SK-N-SH (cell line): ENCODE measurements at regions of chr16 and their contacts with region 1.

Region 1: GRCh38 chr16:83952940-83953795 is at the start of gene OSGIN1:
- DNase-seq: peak; percentile 88
- H3K4me3 ChIP-seq: peak within 1 kb of the TSS; percentile 62 to 65
- H3K27ac ChIP-seq: peak within 1 kb of the TSS; percentile 53 to 78
- H3K4me1 ChIP-seq: peaks cover 9 to 27% of the 10 kb centered on the region in 2 experiments; a peak in 2 of 4 replicates
- H3K27me3 ChIP-seq: no peaks in the 10 kb centered on the region
- CTCF ChIP-seq: no peak
- EP300 ChIP-seq: 0 out of 4 replicates have a peak, but pooled peaks of 1 of the 2 experiments have one; percentile 30
- RAD21 ChIP-seq: no peak
- polyA plus RNA-seq, gene OSGIN1: 4.8 and 5.2 TPM in 2 replicates

Region 2: DNA sequence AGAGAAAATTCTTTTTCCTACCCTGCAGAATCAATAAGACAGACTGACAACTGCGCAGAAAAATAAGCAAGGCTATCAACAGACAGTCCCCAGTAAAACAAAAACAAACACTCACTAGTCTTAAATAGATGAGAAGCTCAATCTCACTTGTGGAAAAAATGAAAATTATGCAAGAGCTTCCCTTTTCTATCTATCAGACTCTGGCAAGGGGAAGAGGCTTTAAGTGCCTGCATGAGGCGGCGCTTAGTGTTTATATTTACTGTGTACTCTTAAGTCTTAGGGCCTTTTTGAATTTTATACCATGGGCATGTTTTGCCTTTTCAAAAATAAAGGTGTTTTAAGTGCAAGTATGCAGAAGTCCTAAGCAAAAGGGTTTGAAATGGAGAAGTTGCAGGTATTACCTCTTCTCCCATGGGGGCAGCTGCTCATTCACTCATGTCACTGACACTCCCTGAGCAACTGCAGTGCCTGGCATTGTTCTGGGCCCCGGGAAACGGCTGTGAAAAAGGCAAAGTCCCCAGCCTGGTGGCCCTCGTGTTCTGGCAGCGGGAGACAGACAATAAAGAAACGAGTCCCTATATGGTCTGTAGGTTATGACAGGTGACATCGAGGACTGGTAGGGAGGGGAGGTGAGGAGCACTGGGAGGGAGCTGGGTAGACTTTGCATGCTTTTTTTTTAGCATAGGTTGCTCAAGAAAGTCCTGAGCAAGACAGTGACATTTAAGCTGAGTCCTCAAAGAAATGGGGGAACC is 110.2 kb before region 1 on chr16:
- CTCF ChIA-PET with region 1: no interaction called
- POLR2A ChIA-PET with region 1: no interaction called
- DNase-seq: no peak
- H3K4me3 ChIP-seq: no peak overlapping the region
- H3K27ac ChIP-seq: no peak overlapping the region
- H3K4me1 ChIP-seq: no peaks in the 10 kb centered on the region; a peak in 2 of 4 replicates
- H3K27me3 ChIP-seq: no peaks in the 10 kb centered on the region; the same call in 1 of the 2 replicates
- CTCF ChIP-seq: no peak
- EP300 ChIP-seq: no peak
- RAD21 ChIP-seq: no peak

Region 3: GRCh38 chr16:83856792-83857191 is 96.4 kb before region 1 on chr16:
- CTCF ChIA-PET with region 1: no interaction called
- POLR2A ChIA-PET with region 1: no interaction called
- DNase-seq: no peak
- H3K4me3 ChIP-seq: no peak overlapping the region
- H3K27ac ChIP-seq: no peak overlapping the region
- H3K4me1 ChIP-seq: no peaks in the 10 kb centered on the region
- H3K27me3 ChIP-seq: peaks cover 29% of the 10 kb centered on the region
- CTCF ChIP-seq: no peak
- EP300 ChIP-seq: no peak
- RAD21 ChIP-seq: no peak

Region 4: GRCh38 chr16:83913245-83913633 is 39.9 kb before region 1 on chr16:
- CTCF ChIA-PET with region 1: no interaction called
- POLR2A ChIA-PET with region 1: no interaction called
- DNase-seq: no peak
- H3K4me3 ChIP-seq: no peak overlapping the region
- H3K27ac ChIP-seq: no peak overlapping the region
- H3K4me1 ChIP-seq: no peaks in the 10 kb centered on the region
- H3K27me3 ChIP-seq: no peaks in the 10 kb centered on the region
- CTCF ChIP-seq: no peak
- EP300 ChIP-seq: no peak
- RAD21 ChIP-seq: no peak

Region 5: DNA sequence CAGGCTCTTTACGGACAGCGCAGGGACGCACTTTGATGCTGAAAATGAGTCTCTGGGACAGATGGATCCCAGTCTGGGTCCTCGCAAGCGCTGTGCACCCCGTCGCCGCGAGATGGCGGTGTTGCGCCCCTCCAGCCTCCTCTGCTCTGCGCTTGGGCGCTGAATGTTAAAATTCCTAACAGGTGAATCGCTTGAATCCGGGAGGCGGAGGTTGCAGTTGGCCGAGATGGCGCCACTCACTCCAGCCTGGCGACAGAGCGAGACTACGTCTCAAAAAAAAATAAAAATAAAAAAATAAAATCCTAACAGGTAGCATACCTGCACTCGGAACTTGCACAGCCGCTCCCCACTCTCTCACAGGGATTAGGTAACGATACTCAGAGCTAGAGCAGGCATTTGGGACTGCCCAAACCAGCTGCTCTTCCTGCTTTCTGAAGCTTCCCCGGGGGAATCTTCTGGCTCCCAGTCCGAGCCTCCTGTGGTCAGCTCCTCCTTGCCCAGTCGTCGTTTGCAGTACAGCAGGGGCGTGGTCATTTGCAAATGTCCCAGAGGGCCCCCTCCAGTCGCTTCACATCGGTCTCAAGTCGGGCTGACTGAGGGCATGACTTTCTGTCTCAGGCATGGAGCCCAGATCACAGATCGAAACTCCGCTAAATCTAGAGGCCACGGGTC is 26.3 kb before region 1 on chr16:
- CTCF ChIA-PET with region 1: interaction called, 24 read pairs
- POLR2A ChIA-PET with region 1: no interaction called
- DNase-seq: peak; percentile 90
- H3K4me3 ChIP-seq: peak overlapping the region in 1 of 2 experiments; percentile 51; a peak in 1 of 4 replicates
- H3K27ac ChIP-seq: no peak overlapping the region
- H3K4me1 ChIP-seq: peaks cover 0 to 11% of the 10 kb centered on the region in 2 experiments; a peak in 1 of 4 replicates
- H3K27me3 ChIP-seq: no peaks in the 10 kb centered on the region
- CTCF ChIP-seq: peak; percentile 95
- EP300 ChIP-seq: no peak
- RAD21 ChIP-seq: peak; percentile 73

Region 6: GRCh38 chr16:83942815-83943515 is 10.2 kb before region 1 on chr16:
- CTCF ChIA-PET with region 1: interaction called, 23 read pairs
- POLR2A ChIA-PET with region 1: no interaction called
- DNase-seq: no peak
- H3K4me3 ChIP-seq: no peak overlapping the region
- H3K27ac ChIP-seq: no peak overlapping the region
- H3K4me1 ChIP-seq: no peaks in the 10 kb centered on the region
- H3K27me3 ChIP-seq: no peaks in the 10 kb centered on the region
- CTCF ChIP-seq: no peak
- EP300 ChIP-seq: no peak
- RAD21 ChIP-seq: no peak

Region 7: DNA sequence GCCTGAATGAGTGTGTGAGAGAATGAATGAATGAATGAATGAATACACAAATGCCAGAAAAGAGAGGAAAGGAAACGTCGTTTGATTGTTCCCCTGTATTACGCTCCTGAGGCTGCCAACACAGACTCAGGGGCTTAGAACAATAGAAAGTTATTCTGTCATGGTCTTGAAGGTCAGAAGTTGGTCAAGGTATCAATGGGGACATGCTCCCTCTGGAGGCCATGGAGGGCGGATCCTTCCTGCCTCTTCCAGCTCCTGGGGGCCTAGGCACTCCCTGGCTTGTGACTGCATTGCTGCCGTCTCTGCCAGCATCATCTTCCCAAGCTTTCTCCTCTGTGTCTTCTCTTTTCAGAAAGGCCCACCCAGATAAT is 90.9 kb after region 1 on chr16:
- CTCF ChIA-PET with region 1: interaction called, 57 read pairs
- POLR2A ChIA-PET with region 1: no interaction called
- DNase-seq: peak; percentile 68
- H3K4me3 ChIP-seq: no peak overlapping the region
- H3K27ac ChIP-seq: no peak overlapping the region
- H3K4me1 ChIP-seq: peaks cover 0 to 5% of the 10 kb centered on the region in 2 experiments; a peak in 1 of 4 replicates
- H3K27me3 ChIP-seq: no peaks in the 10 kb centered on the region; the same call in 1 of the 2 replicates
- CTCF ChIP-seq: peak; percentile 63
- EP300 ChIP-seq: no peak
- RAD21 ChIP-seq: peak; percentile 45; the same call in 1 of the 2 replicates

Region 8: DNA sequence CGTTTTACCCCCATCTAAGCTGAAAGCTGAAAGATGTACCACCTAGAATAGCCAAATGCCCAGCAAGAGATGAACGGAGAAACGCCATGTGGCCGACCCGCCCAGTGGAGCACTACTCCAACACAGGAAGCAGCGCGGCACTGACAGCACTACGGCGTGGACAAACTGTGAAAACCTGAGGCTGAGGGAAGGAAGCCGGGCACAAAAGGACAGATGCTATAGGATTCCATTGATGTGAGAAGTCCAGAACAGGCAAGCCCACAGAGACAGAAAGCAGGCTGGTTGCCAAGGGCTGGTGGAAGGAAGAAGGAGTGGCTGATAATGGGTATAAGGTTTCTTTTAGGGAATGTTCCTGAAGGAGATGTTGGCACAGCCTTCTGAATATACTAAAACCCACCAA is 118.8 kb after region 1 on chr16:
- CTCF ChIA-PET with region 1: interaction called, 470 read pairs
- POLR2A ChIA-PET with region 1: no interaction called
- DNase-seq: no peak
- H3K4me3 ChIP-seq: no peak overlapping the region
- H3K27ac ChIP-seq: no peak overlapping the region
- H3K4me1 ChIP-seq: peaks cover 0 to 5% of the 10 kb centered on the region in 2 experiments; a peak in 1 of 4 replicates
- H3K27me3 ChIP-seq: no peaks in the 10 kb centered on the region
- CTCF ChIP-seq: no peak
- EP300 ChIP-seq: no peak
- RAD21 ChIP-seq: no peak

Region 9: DNA sequence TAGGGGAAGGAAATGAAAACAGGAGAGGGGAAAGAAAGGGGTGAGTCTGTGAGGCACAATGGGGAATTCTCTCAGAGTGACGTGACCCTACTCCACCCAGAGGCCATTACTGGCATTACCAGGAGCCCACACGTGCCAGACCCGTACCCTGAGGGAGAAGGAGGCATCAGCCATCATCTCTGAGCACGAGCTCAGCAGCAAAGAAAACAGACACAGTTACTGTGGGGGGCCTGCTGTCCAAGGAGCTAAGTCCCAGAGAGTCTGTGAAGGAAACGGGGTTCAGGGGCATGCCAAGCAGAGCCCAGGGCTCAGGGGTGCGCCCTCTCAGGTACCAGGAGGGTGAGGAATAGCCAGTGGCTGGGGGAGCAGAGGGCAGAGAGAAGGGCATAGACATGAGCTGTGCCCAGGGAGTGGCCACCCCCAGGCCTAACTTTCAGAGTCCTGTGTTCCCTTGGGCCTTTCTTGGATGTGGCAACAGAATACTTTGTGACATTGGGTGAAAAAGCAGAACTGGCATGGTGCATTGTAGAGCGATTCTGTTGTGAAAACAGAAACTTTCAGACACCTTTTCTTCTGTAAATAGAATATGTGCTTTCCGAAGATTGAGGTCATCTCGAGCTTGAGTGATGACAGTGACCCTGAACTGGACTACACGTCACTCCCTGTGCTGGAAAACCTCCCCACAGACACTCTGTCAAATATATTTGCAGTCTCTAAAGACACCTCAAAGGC is 222.3 kb after region 1 on chr16:
- CTCF ChIA-PET with region 1: interaction called, 15 read pairs
- POLR2A ChIA-PET with region 1: no interaction called
- DNase-seq: peak; percentile 91
- H3K4me3 ChIP-seq: no peak overlapping the region
- H3K27ac ChIP-seq: no peak overlapping the region
- H3K4me1 ChIP-seq: peaks cover 0 to 7% of the 10 kb centered on the region in 2 experiments; a peak in 1 of 4 replicates
- H3K27me3 ChIP-seq: no peaks in the 10 kb centered on the region
- CTCF ChIP-seq: peak; percentile 78
- EP300 ChIP-seq: no peak
- RAD21 ChIP-seq: peak; percentile 91